HepG2 (cell line): ENCODE measurements at regions of chr2 and their contacts with region 1.

Region 1: GRCh38 chr2:205925373-205926337 is 160.3 kb downstream of the INO80D start:
- DNase-seq: peak; percentile 38
- ATAC-seq: peak; percentile 96
- H3K4me3 ChIP-seq: peak overlapping the region in 1 of 3 experiments; percentile 33; a peak in 2 of 6 replicates
- H3K27ac ChIP-seq: no peak overlapping the region
- H3K4me1 ChIP-seq: peaks cover 35% of the 10 kb centered on the region
- H3K27me3 ChIP-seq: peaks cover 5 to 67% of the 10 kb centered on the region in 2 experiments; a peak in 4 of 5 replicates
- CTCF ChIP-seq: peak; percentile 100
- EP300 ChIP-seq: no peak
- POLR2A ChIP-seq: no peak
- RAD21 ChIP-seq: peak; percentile 98

Region 2: GRCh38 chr2:205766779-205767359 is 158.8 kb before region 1 on chr2:
- CTCF ChIA-PET with region 1: interaction called, 14 read pairs
- POLR2A ChIA-PET with region 1: no interaction called
- in situ Hi-C with region 1: loop called (anchors 5 kb)
- intact Hi-C with region 1: loop called (anchors 2 kb)
- DNase-seq: peak; percentile 55
- ATAC-seq: peak; percentile 42; the same call in 1 of the 3 replicates
- H3K4me3 ChIP-seq: no peak overlapping the region
- H3K27ac ChIP-seq: no peak overlapping the region
- H3K4me1 ChIP-seq: no peaks in the 10 kb centered on the region
- H3K27me3 ChIP-seq: no peaks in the 10 kb centered on the region; a peak in 3 of 5 replicates
- CTCF ChIP-seq: peak; percentile 83
- EP300 ChIP-seq: no peak
- POLR2A ChIP-seq: no peak
- RAD21 ChIP-seq: peak; percentile 38; the same call in 1 of the 2 replicates

Region 3: DNA sequence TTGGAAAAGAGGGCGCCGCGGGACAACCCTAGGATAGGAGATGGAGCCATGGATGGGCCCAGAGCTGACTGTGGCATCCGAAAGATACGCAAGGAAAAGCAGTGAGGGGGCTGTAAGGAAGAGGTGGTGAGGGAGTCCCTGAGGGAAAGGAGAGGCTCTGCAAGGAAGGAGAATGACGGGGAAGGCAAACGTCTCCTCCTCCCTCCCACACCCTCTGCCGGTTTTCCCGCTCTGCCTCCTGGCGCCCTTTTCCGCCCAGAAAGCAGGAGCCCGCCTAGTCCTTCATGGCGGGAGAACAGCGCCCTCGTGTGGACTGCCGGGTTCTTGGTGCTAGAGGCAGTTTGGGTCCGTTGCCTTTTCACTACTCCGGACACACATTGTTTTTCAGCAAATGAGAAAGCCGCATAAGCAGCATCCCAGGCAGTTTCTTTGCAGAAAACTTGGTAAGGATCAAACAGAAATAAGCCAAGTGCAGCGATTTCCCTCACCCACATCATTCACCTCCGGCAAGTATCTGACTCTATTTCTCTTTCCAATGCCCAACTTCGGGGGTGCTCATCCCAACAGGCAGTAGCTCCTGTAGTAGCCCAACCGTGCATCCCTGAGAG is 40.1 kb before region 1 on chr2:
- CTCF ChIA-PET with region 1: interaction called, 13 read pairs
- POLR2A ChIA-PET with region 1: no interaction called
- in situ Hi-C with region 1: no loop called
- intact Hi-C with region 1: no loop called
- DNase-seq: peak; percentile 65
- ATAC-seq: peak; percentile 99
- H3K4me3 ChIP-seq: no peak overlapping the region
- H3K27ac ChIP-seq: no peak overlapping the region
- H3K4me1 ChIP-seq: no peaks in the 10 kb centered on the region
- H3K27me3 ChIP-seq: peaks cover 0 to 3% of the 10 kb centered on the region in 2 experiments; a peak in 1 of 5 replicates
- CTCF ChIP-seq: peak; percentile 97
- EP300 ChIP-seq: no peak
- POLR2A ChIP-seq: no peak
- RAD21 ChIP-seq: peak; percentile 97

Region 4: GRCh38 chr2:205947621-205948495 is 22.2 kb after region 1 on chr2:
- CTCF ChIA-PET with region 1: interaction called, 10 read pairs
- POLR2A ChIA-PET with region 1: interaction called, 3 read pairs
- in situ Hi-C with region 1: no loop called
- intact Hi-C with region 1: loop called (anchors 1 kb)
- DNase-seq: peak; percentile 68
- ATAC-seq: peak; percentile 71
- H3K4me3 ChIP-seq: peak overlapping the region; percentile 14 to 43 (median 29); a peak in 4 of 6 replicates
- H3K27ac ChIP-seq: no peak overlapping the region
- H3K4me1 ChIP-seq: peaks cover 77% of the 10 kb centered on the region
- H3K27me3 ChIP-seq: 0 out of 5 replicates have a peak, but pooled peaks cover 0 to 2% of the 10 kb centered on the region in 2 experiments
- CTCF ChIP-seq: peak; percentile 97
- EP300 ChIP-seq: peak in 1 of 2 experiments; percentile 27; a peak in 1 of 4 replicates
- POLR2A ChIP-seq: no peak
- RAD21 ChIP-seq: peak; percentile 92